Right ventricle myocardium inferior (tissue), 1 donor: ENCODE measurements at regions of chr4 and their contacts with region 1.

Region 1: GRCh38 chr4:100093091-100093866 is 97.0 kb downstream of the DDIT4L start:
- DNase-seq: peak; percentile 71
- ATAC-seq: peak; percentile 79

Region 2: GRCh38 chr4:101014417-101014816 is 921.1 kb after region 1 on chr4:
- intact Hi-C with region 1: no loop called
- DNase-seq: no peak
- ATAC-seq: no peak

Region 3: GRCh38 chr4:101064541-101065180 is 971.4 kb after region 1 on chr4:
- intact Hi-C with region 1: loop called (anchors 5 kb)
- DNase-seq: no peak
- ATAC-seq: no peak